ENCODE measurements at regions of chr20 and their contacts with region 1.

Region 1: DNA sequence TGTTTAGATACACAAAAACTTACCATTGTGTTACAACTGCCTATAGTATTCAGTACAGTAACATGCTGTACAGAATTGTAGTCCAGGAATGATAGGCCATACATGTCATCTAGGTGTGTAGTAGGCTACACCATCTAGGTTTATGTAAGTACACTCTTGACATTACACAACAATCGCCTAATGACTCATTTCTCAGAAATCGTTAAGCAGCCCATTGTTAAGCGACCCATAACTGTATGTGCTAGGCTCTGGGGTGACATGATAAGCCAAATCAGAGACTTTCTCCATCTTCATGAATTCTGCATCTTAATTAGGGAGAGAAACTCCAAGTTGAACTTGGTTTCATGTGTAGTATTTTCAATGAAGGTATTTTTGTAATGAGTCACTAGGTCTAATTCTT is 17.2 kb downstream of the STK35 start:
- DNase-seq: peak; percentile 20
- ATAC-seq: peak; percentile 98
- H3K4me3 ChIP-seq: no peak overlapping the region
- H3K27ac ChIP-seq: no peak overlapping the region
- H3K4me1 ChIP-seq: peaks cover 5% of the 10 kb centered on the region
- H3K27me3 ChIP-seq: no peaks in the 10 kb centered on the region
- CTCF ChIP-seq: no peak
- EP300 ChIP-seq: 0 out of 4 replicates have a peak, but pooled peaks of 1 of the 2 experiments have one; percentile 10
- POLR2A ChIP-seq: no peak
- RAD21 ChIP-seq: no peak

Region 2: GRCh38 chr20:2101865-2102584 is 16.8 kb before region 1 on chr20:
- CTCF ChIA-PET with region 1: interaction called, 5 read pairs
- POLR2A ChIA-PET with region 1: interaction called, 25 read pairs
- RAD21 ChIA-PET with region 1: interaction called, 6 read pairs
- SMC1A ChIA-PET with region 1: interaction called, 6 read pairs
- in situ Hi-C with region 1: no loop called
- intact Hi-C with region 1: no loop called
- DNase-seq: peak; percentile 66
- ATAC-seq: peak; percentile 91
- H3K4me3 ChIP-seq: peak overlapping the region; percentile 92
- H3K27ac ChIP-seq: peak overlapping the region; percentile 100
- H3K4me1 ChIP-seq: peaks cover 11% of the 10 kb centered on the region; the same call in 1 of the 2 replicates
- H3K27me3 ChIP-seq: no peaks in the 10 kb centered on the region
- CTCF ChIP-seq: no peak
- EP300 ChIP-seq: no peak
- POLR2A ChIP-seq: peak; percentile 93
- RAD21 ChIP-seq: no peak